ENCODE measurements at regions of chr6 and their contacts with region 1.

Region 1: DNA sequence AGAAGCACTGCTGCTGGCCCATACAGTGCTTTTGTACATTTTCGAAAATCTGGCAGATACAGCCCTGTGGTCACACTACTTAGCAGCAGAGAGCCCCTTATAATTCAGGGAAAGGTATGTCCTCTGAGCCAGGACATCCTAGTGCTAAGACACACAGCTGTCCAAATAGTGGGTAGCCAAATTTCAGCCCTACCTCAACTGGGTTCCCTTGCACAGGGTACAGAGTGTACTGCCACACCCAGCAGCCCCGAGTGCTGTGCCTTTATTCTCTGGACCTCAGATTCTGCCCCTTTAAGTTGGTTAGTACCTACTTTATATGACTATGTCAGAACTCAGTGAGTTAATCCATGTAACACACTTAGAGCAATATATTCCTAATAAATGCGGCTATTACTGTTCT is 47.6 kb downstream of the PRPH2 start:
- DNase-seq: no peak
- H3K4me3 ChIP-seq: no peak overlapping the region
- H3K27ac ChIP-seq: no peak overlapping the region
- H3K4me1 ChIP-seq: no peaks in the 10 kb centered on the region
- H3K27me3 ChIP-seq: no peaks in the 10 kb centered on the region
- CTCF ChIP-seq: no peak
- EP300 ChIP-seq: no peak
- POLR2A ChIP-seq: no peak
- RAD21 ChIP-seq: no peak

Region 2: DNA sequence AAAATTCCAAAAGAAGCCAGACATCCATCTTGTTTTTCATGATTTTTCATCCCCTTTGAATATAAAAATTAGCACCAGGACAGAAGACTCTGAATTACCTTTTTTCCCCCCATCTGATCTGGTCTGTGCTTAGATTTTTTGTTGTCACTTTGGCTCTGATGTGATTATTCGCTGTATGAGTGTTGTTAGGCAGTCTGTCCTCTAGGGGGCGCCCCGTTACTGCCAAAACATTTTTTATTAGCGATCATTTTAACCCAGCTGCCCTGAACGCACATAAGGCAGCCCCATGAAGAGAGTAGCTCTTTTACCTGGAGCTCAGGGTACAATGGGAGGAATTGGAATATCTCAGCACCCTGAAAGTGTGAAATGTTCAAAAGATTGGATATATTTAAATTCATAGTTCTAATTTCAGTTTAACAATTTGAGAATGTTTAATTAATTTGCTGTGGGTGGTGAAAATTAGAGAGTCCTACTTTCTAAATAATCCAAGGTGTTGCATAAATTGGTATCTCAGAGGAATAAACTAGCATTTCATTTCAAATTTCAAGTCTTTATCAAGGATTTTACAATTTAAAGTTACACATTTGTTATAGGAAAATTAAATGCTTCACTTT is 13.1 kb before region 1 on chr6:
- CTCF ChIA-PET with region 1: interaction called, 15 read pairs
- POLR2A ChIA-PET with region 1: no interaction called
- DNase-seq: peak; percentile 13 to 91
- H3K4me3 ChIP-seq: no peak overlapping the region
- H3K27ac ChIP-seq: no peak overlapping the region
- H3K4me1 ChIP-seq: no peaks in the 10 kb centered on the region
- H3K27me3 ChIP-seq: no peaks in the 10 kb centered on the region
- CTCF ChIP-seq: peak; percentile 16 to 88 (median 79)
- EP300 ChIP-seq: no peak
- POLR2A ChIP-seq: no peak
- RAD21 ChIP-seq: peak; percentile 85 to 92

Measured in H1 (cell line).